Endothelial cell of umbilical vein (primary cell): ENCODE measurements at regions of chr6 and their contacts with region 1.

Region 1: GRCh38 chr6:112296122-112296521 is 41.8 kb upstream of the LAMA4 start:
- DNase-seq: peak; percentile 62
- H3K4me3 ChIP-seq: no peak overlapping the region
- H3K27ac ChIP-seq: no peak overlapping the region
- H3K4me1 ChIP-seq: peaks cover 15% of the 10 kb centered on the region
- H3K27me3 ChIP-seq: no peaks in the 10 kb centered on the region
- CTCF ChIP-seq: peak; percentile 60 to 64
- POLR2A ChIP-seq: no peak

Region 2: GRCh38 chr6:111541026-111541681 is 755.0 kb before region 1 on chr6:
- CTCF ChIA-PET with region 1: no interaction called
- POLR2A ChIA-PET with region 1: no interaction called
- dilution Hi-C with region 1: no loop called
- intact Hi-C with region 1: no loop called
- DNase-seq: peak; percentile 21
- H3K4me3 ChIP-seq: no peak overlapping the region
- H3K27ac ChIP-seq: no peak overlapping the region
- H3K4me1 ChIP-seq: peaks cover 10% of the 10 kb centered on the region
- H3K27me3 ChIP-seq: no peaks in the 10 kb centered on the region
- CTCF ChIP-seq: no peak
- POLR2A ChIP-seq: no peak

Region 3: GRCh38 chr6:112193117-112193516 is 103.0 kb before region 1 on chr6:
- CTCF ChIA-PET with region 1: no interaction called
- POLR2A ChIA-PET with region 1: no interaction called
- dilution Hi-C with region 1: no loop called
- intact Hi-C with region 1: no loop called
- DNase-seq: no peak
- H3K4me3 ChIP-seq: no peak overlapping the region
- H3K27ac ChIP-seq: no peak overlapping the region
- H3K4me1 ChIP-seq: peaks cover 8% of the 10 kb centered on the region
- H3K27me3 ChIP-seq: no peaks in the 10 kb centered on the region
- CTCF ChIP-seq: no peak
- POLR2A ChIP-seq: peak; percentile 40

Region 4: DNA sequence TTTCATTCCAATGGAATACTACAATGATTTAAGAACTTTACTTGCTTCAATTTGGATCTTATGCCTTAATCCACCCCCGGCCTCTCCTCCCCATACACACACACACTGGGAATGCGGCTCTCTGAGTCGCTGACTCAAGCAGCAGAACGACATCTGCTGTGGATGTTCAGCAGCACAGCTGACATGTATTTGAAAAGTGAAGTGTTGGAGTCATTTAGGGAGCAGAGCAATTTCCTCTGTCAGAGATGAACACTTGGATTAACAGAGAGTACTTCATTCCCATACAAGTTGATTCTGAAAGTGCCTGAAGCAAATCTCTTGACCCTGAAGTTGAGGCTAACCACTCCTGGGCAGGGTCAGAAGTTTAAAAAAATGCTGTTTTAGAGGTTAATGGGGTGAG is 13.9 kb before region 1 on chr6:
- CTCF ChIA-PET with region 1: interaction called, 32 read pairs
- POLR2A ChIA-PET with region 1: interaction called, 3 read pairs
- dilution Hi-C with region 1: no loop called
- intact Hi-C with region 1: no loop called
- DNase-seq: peak; percentile 72
- H3K4me3 ChIP-seq: no peak overlapping the region
- H3K27ac ChIP-seq: no peak overlapping the region
- H3K4me1 ChIP-seq: peaks cover 17% of the 10 kb centered on the region
- H3K27me3 ChIP-seq: no peaks in the 10 kb centered on the region
- CTCF ChIP-seq: peak; percentile 19 to 33
- POLR2A ChIP-seq: no peak

Region 5: DNA sequence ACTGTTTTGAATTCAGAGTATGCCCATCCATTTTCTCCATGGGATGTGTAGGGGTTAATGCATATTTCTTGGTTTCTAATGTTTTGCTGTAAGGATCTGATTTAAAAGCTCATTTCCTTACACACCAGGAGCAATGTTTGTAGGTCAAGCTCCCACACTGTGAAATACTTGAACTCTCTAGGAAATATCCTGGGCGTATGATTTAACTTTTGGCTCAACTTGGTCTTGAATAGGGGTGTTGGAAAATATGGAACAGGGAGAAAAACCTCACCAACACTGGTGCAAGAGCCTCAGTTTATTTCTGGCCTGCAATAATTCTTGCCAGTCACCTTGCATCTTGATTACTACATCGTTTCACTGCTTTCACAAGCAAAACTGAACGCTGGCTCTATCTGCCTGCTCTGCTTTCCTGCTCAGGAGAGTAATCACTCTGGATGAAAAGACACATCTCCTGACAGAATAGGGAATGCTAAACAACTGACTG is 25.9 kb after region 1 on chr6:
- CTCF ChIA-PET with region 1: interaction called, 10 read pairs
- POLR2A ChIA-PET with region 1: no interaction called
- dilution Hi-C with region 1: no loop called
- intact Hi-C with region 1: no loop called
- DNase-seq: peak; percentile 21
- H3K4me3 ChIP-seq: no peak overlapping the region
- H3K27ac ChIP-seq: no peak overlapping the region
- H3K4me1 ChIP-seq: peaks cover 16% of the 10 kb centered on the region
- H3K27me3 ChIP-seq: no peaks in the 10 kb centered on the region
- CTCF ChIP-seq: no peak
- POLR2A ChIP-seq: no peak

Region 6: DNA sequence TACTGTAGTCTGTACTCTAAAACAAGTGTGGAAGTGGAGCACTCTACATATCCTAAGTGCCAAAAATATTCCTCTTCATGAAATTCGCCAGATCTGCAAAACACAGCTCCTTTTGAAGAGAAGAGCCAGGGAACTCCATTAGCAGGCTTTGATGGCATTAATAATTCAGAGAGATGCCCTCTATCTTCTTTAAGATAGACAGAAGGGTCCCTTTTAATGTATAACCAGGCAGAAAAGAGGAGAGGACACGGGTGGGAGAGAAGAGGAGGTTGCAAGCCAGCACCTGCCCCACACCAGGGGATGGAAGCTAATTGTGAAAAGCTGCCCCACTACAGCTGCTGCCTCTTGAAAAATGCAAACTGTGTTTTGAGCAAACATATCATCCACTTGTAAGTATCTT is 47.3 kb after region 1 on chr6:
- CTCF ChIA-PET with region 1: no interaction called
- POLR2A ChIA-PET with region 1: no interaction called
- dilution Hi-C with region 1: no loop called
- intact Hi-C with region 1: no loop called
- DNase-seq: no peak
- H3K4me3 ChIP-seq: no peak overlapping the region
- H3K27ac ChIP-seq: no peak overlapping the region
- H3K4me1 ChIP-seq: no peaks in the 10 kb centered on the region
- H3K27me3 ChIP-seq: peaks cover 0 to 2% of the 10 kb centered on the region in 2 experiments
- CTCF ChIP-seq: no peak
- POLR2A ChIP-seq: no peak

Region 7: DNA sequence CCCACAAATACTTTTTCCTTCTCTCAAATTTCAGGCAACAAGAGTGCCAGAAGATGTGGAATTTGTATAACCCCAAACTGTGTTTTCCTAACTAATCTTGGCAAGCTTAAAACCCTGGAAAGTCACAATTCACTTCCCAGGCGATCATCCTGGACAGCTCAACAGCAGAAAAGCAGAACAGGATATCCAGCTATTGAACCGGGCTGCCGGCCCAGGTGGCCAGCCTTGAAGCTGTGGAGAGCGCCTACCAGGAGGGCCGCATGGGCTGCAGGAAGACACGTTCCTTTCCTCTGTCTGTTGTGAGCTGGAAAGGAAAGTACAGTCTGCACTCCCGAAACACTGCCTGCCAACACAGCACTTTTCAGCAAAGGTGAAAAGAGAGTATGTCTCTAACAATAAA is 841.3 kb after region 1 on chr6:
- CTCF ChIA-PET with region 1: no interaction called
- POLR2A ChIA-PET with region 1: no interaction called
- dilution Hi-C with region 1: no loop called
- intact Hi-C with region 1: no loop called
- DNase-seq: peak; percentile 96
- H3K4me3 ChIP-seq: peak overlapping the region in 1 of 3 experiments; percentile 3
- H3K27ac ChIP-seq: peak overlapping the region; percentile 69
- H3K4me1 ChIP-seq: peaks cover 29% of the 10 kb centered on the region
- H3K27me3 ChIP-seq: no peaks in the 10 kb centered on the region
- CTCF ChIP-seq: no peak
- POLR2A ChIP-seq: no peak